Right ventricle myocardium inferior (tissue), 1 donor: ENCODE measurements at regions of chr12 and their contacts with region 1.

Region 1: DNA sequence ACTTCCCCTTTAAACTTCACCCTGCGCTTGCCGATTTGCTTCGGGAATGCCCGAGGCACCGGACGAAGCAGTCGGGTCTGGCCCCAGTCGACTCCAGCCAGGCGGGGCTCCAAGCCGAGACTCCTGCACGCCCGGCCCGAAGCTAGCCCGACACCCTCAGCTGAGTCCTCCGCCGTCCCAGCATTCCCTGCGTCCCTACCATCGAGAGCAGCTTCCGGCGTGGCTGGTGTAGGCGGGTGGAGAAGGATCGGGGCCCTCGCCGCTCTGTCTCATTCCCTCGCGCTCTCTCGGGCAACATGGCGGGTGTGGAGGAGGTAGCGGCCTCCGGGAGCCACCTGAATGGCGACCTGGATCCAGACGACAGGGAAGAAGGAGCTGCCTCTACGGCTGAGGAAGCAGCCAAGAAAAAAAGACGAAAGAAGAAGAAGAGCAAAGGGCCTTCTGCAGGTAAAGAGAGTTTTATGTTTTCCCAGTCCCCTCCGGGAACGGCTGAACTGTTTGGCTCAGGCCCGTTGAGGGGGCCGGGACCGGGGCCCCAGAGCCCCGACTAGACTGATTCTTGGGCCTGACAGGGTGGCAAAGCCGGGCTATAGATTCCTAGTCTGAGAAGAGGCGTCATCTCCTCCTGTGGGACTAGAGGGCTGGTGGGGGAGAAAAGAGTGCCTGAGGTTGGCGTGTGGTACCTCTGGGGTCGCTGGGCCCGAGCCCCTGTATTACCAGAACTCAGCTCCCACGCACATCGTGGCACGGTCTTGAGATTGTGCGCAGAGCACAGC is at the start of gene METAP2:
- DNase-seq: peak; percentile 98
- ATAC-seq: peak; percentile 100
- total RNA-seq, gene METAP2: 53.2 TPM

Region 2: DNA sequence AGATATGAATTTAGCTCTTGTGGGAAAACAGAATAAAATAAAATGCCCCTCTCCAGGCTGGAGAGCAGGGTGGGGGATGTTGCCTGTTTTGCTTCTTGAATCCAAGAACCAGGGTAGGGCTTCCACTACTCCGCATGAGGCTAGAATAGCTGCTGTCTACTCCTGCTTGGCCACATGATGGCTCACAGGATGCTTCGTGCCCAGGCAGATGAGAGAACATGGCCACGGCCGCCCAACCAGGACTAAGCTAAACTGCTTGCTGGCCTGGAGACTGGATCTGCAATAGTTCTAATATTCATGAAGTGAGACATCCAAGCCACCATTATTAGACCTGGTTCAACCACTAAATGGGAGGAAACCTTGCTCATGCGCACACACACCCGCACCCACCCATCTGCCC is 122.3 kb before region 1 on chr12:
- intact Hi-C with region 1: loop called (anchors 10 kb)
- DNase-seq: no peak
- ATAC-seq: peak; percentile 89

Region 3: GRCh38 chr12:95385246-95386035 is 88.6 kb before region 1 on chr12:
- intact Hi-C with region 1: loop called (anchors 5 kb)
- DNase-seq: no peak
- ATAC-seq: peak; percentile 93

Region 4: GRCh38 chr12:95424271-95424994 is 49.6 kb before region 1 on chr12:
- intact Hi-C with region 1: loop called (anchors 5 kb)
- DNase-seq: no peak
- ATAC-seq: no peak

Region 5: GRCh38 chr12:95548539-95549391 is 74.7 kb after region 1 on chr12:
- intact Hi-C with region 1: no loop called
- DNase-seq: peak; percentile 80
- ATAC-seq: peak; percentile 94